ENCODE measurements at regions of chr12 and their contacts with region 1.

Region 1: GRCh38 chr12:8949342-8950220 is at the start of gene M6PR:
- DNase-seq: peak; percentile 96
- ATAC-seq: peak; percentile 85
- H3K4me3 Mint-ChIP-seq: peak within 1 kb of the TSS; percentile 89
- H3K27ac Mint-ChIP-seq: peak within 1 kb of the TSS; percentile 97
- H3K4me1 Mint-ChIP-seq: peaks cover 57% of the 10 kb centered on the region
- H3K27me3 Mint-ChIP-seq: no peaks in the 10 kb centered on the region
- total RNA-seq, gene M6PR: 146 to 179 TPM

Region 2: GRCh38 chr12:8697476-8698131 is 252.0 kb before region 1 on chr12 and contains the start of gene RIMKLB:
- CTCF ChIA-PET with region 1: no interaction called
- POLR2A ChIA-PET with region 1: interaction called, 4 read pairs
- intact Hi-C with region 1: loop called in 1 of 2 experiments (anchors 1 kb)
- DNase-seq: peak; percentile 82
- ATAC-seq: peak; percentile 93
- H3K4me3 Mint-ChIP-seq: peak within 1 kb of the TSS; percentile 86
- H3K27ac Mint-ChIP-seq: peak within 1 kb of the TSS; percentile 85
- H3K4me1 Mint-ChIP-seq: peaks cover 18% of the 10 kb centered on the region
- H3K27me3 Mint-ChIP-seq: peaks cover 2% of the 10 kb centered on the region
- total RNA-seq, gene RIMKLB: 5.2 to 5.3 TPM

Region 3: GRCh38 chr12:8960176-8960575 is 10.6 kb after region 1 on chr12:
- CTCF ChIA-PET with region 1: interaction called, 20 read pairs
- POLR2A ChIA-PET with region 1: no interaction called
- intact Hi-C with region 1: no loop called
- DNase-seq: no peak
- ATAC-seq: peak; percentile 82
- H3K4me3 Mint-ChIP-seq: no peak overlapping the region
- H3K27ac Mint-ChIP-seq: peak overlapping the region; percentile 23
- H3K4me1 Mint-ChIP-seq: peaks cover 61% of the 10 kb centered on the region
- H3K27me3 Mint-ChIP-seq: no peaks in the 10 kb centered on the region

Region 4: GRCh38 chr12:8996682-8997360 is 47.2 kb after region 1 on chr12:
- CTCF ChIA-PET with region 1: interaction called, 5 read pairs
- POLR2A ChIA-PET with region 1: no interaction called
- intact Hi-C with region 1: loop called (anchors 1 to 2 kb)
- DNase-seq: peak; percentile 52
- ATAC-seq: peak; percentile 93
- H3K4me3 Mint-ChIP-seq: no peak overlapping the region
- H3K27ac Mint-ChIP-seq: no peak overlapping the region
- H3K4me1 Mint-ChIP-seq: peaks cover 62% of the 10 kb centered on the region
- H3K27me3 Mint-ChIP-seq: peaks cover 9% of the 10 kb centered on the region

Region 5: DNA sequence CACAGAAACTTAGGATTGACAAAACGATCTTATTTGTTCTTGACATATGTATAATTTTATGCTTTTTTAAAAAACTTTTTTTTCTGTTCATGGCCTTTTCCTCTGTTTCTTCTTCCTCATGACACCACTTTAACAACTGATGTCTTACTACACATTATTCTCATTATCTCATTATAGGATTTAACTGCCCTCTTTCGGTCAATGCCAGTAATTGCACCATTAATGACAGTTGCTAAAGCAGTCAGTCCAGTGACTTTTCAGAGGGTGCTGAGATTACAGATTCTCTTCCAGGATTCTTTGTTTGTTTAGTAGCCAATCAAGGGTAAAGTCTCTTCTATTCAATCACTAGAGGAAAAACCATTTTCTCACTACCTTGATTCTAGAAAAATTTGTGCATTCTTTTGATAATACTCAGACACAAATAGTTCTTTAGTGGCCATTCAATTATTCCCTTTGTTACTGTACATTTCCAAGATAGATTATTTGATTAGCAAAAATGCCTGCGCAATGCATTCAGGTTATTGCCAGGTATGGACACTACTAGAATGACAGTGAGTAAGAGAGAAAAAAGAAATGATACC is 89.9 kb after region 1 on chr12:
- CTCF ChIA-PET with region 1: interaction called, 114 read pairs
- POLR2A ChIA-PET with region 1: interaction called, 9 read pairs
- intact Hi-C with region 1: loop called (anchors 1 kb)
- DNase-seq: no peak
- ATAC-seq: peak; percentile 78
- H3K4me3 Mint-ChIP-seq: no peak overlapping the region
- H3K27ac Mint-ChIP-seq: no peak overlapping the region
- H3K4me1 Mint-ChIP-seq: peaks cover 48% of the 10 kb centered on the region
- H3K27me3 Mint-ChIP-seq: no peaks in the 10 kb centered on the region

Region 6: GRCh38 chr12:9073076-9073475 is 123.5 kb after region 1 on chr12:
- CTCF ChIA-PET with region 1: no interaction called
- POLR2A ChIA-PET with region 1: no interaction called
- intact Hi-C with region 1: no loop called
- DNase-seq: no peak
- ATAC-seq: no peak
- H3K4me3 Mint-ChIP-seq: no peak overlapping the region
- H3K27ac Mint-ChIP-seq: no peak overlapping the region
- H3K4me1 Mint-ChIP-seq: no peaks in the 10 kb centered on the region
- H3K27me3 Mint-ChIP-seq: no peaks in the 10 kb centered on the region